Activated T-helper 1 cell treated with anti-CD3 and anti-CD28 coated beads, Interleukin-12 subunit alpha, Interleukin-12 subunit beta, Interleukin-2, Interleukin-4 antibody, amounts not matched to agents 30 ng/mL and 10 ng/mL and 1 ng/mL, durations not matched to agents 14 hours and 24 hours and 36 hours (primary cell): ENCODE measurements at regions of chr9 and their contacts with region 1.

Region 1: GRCh38 chr9:97598461-97599288 is 34.5 kb downstream of the TSTD2 start:
- DNase-seq: peak; percentile 60
- H3K4me3 Mint-ChIP-seq: no peak overlapping the region
- H3K27ac Mint-ChIP-seq: no peak overlapping the region
- H3K4me1 Mint-ChIP-seq: peaks cover 9% of the 10 kb centered on the region
- H3K27me3 Mint-ChIP-seq: no peaks in the 10 kb centered on the region

Region 2: GRCh38 chr9:97386733-97387503 is 211.8 kb before region 1 on chr9:
- intact Hi-C with region 1: loop called (anchors 1 kb)
- DNase-seq: peak; percentile 63
- H3K4me3 Mint-ChIP-seq: no peak overlapping the region
- H3K27ac Mint-ChIP-seq: no peak overlapping the region
- H3K4me1 Mint-ChIP-seq: peaks cover 41% of the 10 kb centered on the region
- H3K27me3 Mint-ChIP-seq: peaks cover 33% of the 10 kb centered on the region

Region 3: DNA sequence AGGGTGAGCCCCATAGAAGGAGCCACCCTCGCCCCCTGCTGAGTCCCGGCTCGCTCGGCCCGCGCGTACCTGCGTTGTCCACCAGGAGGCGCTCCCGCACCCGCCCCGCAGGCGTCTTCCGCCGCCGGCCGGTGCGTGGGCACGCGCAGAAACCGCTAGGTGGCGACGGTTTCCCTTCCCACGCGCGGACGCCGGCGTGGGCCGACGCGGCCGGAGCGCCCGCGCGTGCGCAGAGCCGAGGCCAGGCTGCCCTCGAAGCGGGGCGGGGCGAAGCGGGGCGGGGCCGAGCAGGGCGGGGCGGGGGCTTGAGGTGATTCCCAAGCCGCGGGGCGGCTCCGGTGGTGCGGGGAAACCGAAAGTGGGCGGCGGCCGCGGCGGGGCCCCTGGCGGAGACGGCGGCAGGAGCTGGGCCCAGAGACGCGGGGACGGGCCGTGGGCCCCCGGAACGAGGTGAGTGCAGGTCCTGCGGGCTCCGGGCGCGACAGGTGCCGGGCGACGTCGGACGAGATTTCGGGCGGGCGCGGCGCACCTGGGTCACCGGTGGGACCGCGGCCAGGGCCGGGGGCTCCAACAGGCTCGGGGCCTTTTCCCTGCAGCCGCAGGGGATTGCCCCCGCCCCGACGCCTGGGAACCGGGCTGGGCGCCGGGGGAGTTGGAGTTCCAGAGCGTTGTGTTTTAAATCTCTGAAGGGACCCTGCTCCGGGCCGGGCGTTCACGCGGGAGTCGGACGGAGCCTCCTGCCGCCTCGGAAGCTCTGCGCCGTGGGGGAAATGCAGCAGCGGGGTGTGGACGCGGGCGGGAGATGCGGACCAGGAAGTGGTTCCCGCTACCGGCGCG is 186.7 kb before region 1 on chr9 and contains the start of gene TDRD7:
- intact Hi-C with region 1: loop called (anchors 1 kb)
- DNase-seq: peak; percentile 87
- H3K4me3 Mint-ChIP-seq: peak within 1 kb of the TSS; percentile 84
- H3K27ac Mint-ChIP-seq: peak within 1 kb of the TSS; percentile 61
- H3K4me1 Mint-ChIP-seq: peaks cover 35% of the 10 kb centered on the region
- H3K27me3 Mint-ChIP-seq: peaks cover 34% of the 10 kb centered on the region
- total RNA-seq, gene TDRD7: 4.7 TPM in 2 replicates

Region 4: DNA sequence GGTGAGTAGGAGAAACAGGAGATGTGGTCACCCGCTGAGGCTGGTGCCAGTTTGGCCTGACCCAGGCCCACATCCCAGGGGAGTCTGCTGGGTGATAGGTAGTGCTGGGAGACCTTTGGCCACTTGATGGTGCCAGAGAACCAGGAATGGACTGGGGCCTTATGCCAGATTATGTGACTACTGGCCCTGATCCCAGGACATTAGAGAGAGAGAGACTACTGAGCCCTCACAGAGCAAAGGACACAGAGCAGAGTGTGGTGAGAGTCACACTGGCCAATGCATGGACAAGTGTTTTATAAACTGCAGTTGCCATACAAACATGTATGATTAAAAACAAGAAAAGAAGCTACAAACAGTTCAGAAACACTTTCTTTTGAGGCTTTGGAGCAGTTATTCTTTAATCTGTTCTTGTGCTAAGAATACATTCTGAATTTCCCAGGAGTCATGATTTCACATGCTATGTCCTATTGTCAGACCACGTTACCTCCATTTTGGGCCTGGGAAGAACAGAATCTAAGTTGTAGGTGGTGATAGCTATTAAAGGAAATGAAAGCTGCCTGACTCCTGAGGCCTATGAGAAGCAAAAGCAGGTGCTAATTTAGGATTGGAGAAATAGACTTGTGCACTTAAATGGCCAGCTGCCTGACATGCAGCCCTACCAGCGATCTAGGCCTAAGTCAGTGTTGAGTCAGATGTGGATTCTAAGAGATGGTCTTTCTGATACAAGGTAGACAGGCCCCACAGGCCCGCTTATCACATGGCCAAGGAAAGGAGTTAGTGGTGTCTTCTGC is 129.8 kb before region 1 on chr9:
- intact Hi-C with region 1: loop called (anchors 1 kb)
- DNase-seq: peak; percentile 4
- H3K4me3 Mint-ChIP-seq: no peak overlapping the region
- H3K27ac Mint-ChIP-seq: no peak overlapping the region
- H3K4me1 Mint-ChIP-seq: no peaks in the 10 kb centered on the region
- H3K27me3 Mint-ChIP-seq: no peaks in the 10 kb centered on the region

Region 5: DNA sequence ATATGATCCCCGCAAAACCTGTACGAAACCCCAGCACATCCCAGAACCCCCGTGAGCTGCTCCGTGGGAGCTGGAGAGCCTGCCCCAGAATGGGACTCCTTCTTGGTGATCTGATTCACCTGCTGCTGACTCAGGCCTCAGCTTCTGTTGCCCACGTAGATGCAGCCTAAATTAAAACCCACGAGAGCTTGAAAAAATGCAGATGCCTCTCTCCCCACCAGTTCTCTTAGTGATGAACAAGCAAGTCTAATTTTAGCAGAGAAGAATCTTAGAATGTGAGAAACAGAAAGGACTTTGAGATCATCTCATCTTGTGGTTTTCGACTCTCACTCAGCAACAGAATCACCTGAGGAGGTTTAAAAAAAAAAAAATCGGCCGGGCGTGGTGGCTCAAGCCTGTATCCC is 39.6 kb before region 1 on chr9:
- intact Hi-C with region 1: loop called (anchors 5 kb)
- DNase-seq: no peak
- H3K4me3 Mint-ChIP-seq: peak overlapping the region; percentile 24
- H3K27ac Mint-ChIP-seq: peak overlapping the region; percentile 21
- H3K4me1 Mint-ChIP-seq: peaks cover 16% of the 10 kb centered on the region
- H3K27me3 Mint-ChIP-seq: peaks cover 15% of the 10 kb centered on the region

Region 6: GRCh38 chr9:97615439-97616072 is 16.9 kb after region 1 on chr9:
- intact Hi-C with region 1: loop called (anchors 1 kb)
- DNase-seq: peak; percentile 40
- H3K4me3 Mint-ChIP-seq: no peak overlapping the region
- H3K27ac Mint-ChIP-seq: no peak overlapping the region
- H3K4me1 Mint-ChIP-seq: peaks cover 16% of the 10 kb centered on the region
- H3K27me3 Mint-ChIP-seq: no peaks in the 10 kb centered on the region

Region 7: GRCh38 chr9:98087420-98088354 is 489.0 kb after region 1 on chr9:
- intact Hi-C with region 1: no loop called
- DNase-seq: no peak
- H3K4me3 Mint-ChIP-seq: no peak overlapping the region
- H3K27ac Mint-ChIP-seq: no peak overlapping the region
- H3K4me1 Mint-ChIP-seq: peaks cover 51% of the 10 kb centered on the region
- H3K27me3 Mint-ChIP-seq: no peaks in the 10 kb centered on the region